Left cardiac atrium (tissue), 4 donors: ENCODE measurements at regions of chr10 and their contacts with region 1.

Region 1: DNA sequence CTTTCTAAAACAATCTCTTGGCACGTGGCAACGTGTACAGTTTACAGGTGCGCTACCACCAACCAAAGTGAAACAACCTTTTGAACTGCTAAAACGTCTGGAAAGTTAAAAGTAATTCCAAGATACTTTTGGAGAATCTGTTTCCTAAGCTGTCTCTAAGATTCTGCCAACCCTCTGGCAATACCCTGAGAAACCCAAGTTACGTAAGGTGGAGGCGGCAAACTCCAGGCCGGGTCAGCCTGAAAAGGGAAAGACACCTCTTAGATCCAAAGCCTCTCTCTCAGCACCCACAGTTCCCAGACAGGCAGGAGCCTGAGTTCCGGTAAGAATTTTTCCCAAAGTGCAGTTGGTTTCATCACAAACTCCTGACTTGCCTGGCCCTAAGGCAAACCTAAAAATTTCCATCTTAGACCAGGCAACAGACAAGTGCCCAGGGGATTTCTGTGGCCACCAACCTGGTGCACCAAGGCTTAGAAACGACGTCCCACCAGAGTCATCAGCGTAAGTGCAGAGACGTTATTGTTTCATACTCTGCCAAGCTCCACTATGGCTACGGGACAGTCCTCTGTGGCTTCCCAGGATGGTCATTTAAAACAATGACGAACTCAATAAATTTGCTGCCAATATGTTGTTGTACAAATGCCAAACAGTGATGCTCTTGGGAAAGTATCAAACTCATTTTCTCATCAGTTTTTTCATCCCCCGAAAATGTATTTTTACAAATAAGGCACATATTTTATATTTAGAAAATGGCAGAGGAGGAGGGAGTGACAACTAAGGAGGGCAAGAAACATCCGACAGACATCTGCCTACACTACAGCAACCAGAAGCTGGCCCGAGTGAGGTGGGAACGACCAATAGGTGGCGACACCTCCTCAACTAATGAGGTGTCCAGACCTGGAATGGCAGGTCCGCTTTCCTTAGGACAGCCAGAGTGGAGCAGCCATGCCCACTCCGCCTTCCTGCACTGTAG is 205.8 kb upstream of the FRMD4A start:
- DNase-seq: peak; percentile 80
- ATAC-seq: peak; percentile 64 to 84

Region 2: DNA sequence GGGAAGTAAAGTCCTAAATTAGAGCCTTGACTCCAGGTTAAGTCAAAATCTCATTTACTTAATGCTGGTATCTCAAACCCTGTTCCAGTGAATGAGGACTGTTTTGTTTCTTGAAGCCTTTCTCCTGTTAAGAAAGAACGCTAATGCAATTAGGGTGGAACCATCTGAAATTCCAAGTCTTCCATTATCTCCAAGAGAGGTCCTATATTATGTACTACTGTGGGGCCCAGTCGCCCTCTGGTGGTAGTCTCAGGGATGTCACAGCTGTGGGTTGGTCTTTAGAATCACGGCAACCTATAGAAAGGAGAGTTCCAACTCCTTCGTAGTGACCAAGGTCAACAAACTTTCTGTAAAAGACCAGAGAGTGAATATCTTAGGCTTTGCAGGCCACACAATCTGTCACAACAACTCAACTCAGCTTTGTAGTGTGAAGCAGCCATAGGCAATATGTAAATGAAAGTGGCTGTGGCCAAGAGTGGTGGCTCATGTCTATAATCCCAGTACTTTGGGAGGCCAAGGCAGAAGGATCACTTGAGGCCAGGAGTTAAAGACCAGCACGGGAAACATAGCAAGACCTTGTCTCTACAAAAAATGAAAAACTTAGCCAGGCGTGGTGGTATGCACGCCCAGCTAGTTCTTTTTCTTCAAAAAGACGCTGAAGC is 570.0 kb after region 1 on chr10:
- intact Hi-C with region 1: loop called in 1 of 2 experiments (anchors 10 kb)
- DNase-seq: peak; percentile 73
- ATAC-seq: peak; percentile 84 to 93